ENCODE measurements at regions of chr7 and their contacts with region 1.

Region 1: DNA sequence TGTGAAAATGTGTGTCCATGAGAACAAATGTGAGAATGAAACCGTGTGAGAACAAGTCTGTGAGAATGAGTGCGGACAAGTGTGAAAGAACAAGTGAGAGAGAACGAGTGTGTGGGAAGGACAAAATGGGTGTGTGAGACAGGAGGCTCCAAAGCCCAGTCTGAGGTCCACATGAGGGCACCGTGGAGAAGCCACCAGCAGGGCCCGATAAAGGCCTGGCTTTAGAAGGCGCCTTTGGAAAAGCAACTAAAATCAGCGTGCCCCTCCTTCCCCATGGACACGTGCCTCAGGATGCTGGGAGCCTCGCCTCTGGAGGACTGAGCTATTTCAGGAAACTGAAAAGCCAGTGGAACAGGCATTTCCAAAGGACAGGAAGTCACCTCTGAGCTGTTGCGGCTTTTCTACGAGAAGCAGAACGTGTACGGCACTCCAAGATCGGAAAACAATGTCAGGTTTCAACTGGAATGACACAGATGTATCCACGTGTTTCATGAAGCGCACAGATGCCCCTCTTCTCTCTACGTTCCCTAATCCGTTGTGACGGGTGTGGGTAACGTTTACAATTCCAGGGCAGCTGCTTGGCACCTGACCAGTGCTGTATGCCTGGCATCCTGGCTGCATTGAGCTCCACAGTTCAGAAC is 46.4 kb downstream of the ESYT2 start:
- DNase-seq: peak; percentile 36
- ATAC-seq: peak; percentile 49
- H3K4me3 Mint-ChIP-seq: no peak overlapping the region
- H3K27ac Mint-ChIP-seq: no peak overlapping the region
- H3K4me1 Mint-ChIP-seq: peaks cover 2% of the 10 kb centered on the region
- H3K27me3 Mint-ChIP-seq: no peaks in the 10 kb centered on the region
- CTCF ChIP-seq: no peak

Region 2: GRCh38 chr7:158763454-158764033 is 19.3 kb before region 1 on chr7:
- CTCF ChIA-PET with region 1: no interaction called
- POLR2A ChIA-PET with region 1: no interaction called
- intact Hi-C with region 1: no loop called
- DNase-seq: no peak
- ATAC-seq: no peak
- H3K4me3 Mint-ChIP-seq: no peak overlapping the region
- H3K27ac Mint-ChIP-seq: no peak overlapping the region
- H3K4me1 Mint-ChIP-seq: peaks cover 10% of the 10 kb centered on the region
- H3K27me3 Mint-ChIP-seq: no peaks in the 10 kb centered on the region
- CTCF ChIP-seq: no peak

Region 3: DNA sequence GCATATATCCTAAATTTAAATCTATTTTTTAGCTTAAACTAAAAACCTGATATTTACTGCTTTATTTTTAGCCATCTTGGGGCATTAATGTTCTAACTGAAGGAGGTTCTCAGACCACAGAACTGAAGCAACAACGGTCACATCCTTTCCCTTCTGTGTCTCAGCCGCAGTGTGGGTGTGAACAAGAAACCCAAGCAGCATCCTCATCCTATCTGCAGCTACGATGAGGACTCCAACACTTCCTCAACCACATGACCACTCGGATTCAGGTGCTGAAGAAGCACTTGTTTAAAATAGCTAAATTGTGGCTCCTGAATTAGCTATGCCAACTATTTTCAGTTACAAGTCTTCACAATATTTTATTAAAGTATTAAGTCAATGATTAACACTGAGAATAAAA is 41.1 kb after region 1 on chr7:
- CTCF ChIA-PET with region 1: no interaction called
- POLR2A ChIA-PET with region 1: interaction called, 6 read pairs
- intact Hi-C with region 1: loop called (anchors 5 kb)
- DNase-seq: peak; percentile 85
- ATAC-seq: peak; percentile 64
- H3K4me3 Mint-ChIP-seq: peak overlapping the region; percentile 47
- H3K27ac Mint-ChIP-seq: peak overlapping the region; percentile 80
- H3K4me1 Mint-ChIP-seq: peaks cover 65% of the 10 kb centered on the region
- H3K27me3 Mint-ChIP-seq: no peaks in the 10 kb centered on the region
- CTCF ChIP-seq: no peak

Region 4: DNA sequence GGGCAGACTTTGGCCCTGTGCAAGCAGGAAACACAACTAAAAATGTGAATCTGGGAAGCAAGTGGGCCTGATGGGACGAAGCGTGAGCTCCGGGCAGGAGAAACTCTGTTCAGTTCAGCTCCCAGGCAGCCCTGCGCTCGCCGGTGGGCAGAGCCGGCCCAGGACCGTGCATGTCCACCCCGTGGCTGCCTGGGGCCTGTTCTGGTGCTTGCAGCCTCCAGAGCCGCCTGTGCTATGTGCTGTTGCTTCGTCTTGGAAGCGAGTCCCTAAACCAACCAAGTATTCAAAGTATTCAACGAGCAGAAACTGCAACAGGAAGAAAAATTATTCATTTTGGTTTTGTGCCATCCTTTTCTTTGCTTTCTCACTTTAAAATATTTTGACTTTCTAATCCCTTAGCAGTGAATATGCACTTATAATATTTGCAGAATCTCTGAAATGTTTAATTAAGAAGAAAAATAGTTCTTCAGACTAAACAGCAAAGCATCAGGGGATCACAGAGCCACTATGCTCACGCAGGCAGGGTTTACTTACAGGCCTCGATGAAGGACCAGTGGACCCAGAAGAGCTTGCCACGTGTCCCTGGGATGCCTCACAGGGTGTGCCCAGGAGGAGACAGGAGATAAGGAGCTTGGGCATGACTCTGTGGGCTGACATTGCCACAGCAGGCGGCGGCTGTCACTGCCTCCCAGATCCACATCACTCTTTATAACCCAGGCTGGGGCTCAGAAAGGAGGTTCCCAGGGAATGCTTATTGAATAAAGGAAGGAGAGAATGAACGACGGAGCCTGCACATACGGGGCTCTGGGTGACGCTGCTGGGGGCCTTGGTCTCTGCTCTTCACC is 316.2 kb after region 1 on chr7:
- CTCF ChIA-PET with region 1: no interaction called
- POLR2A ChIA-PET with region 1: no interaction called
- intact Hi-C with region 1: no loop called
- DNase-seq: no peak
- ATAC-seq: no peak
- H3K4me3 Mint-ChIP-seq: no peak overlapping the region
- H3K27ac Mint-ChIP-seq: no peak overlapping the region
- H3K4me1 Mint-ChIP-seq: no peaks in the 10 kb centered on the region
- H3K27me3 Mint-ChIP-seq: no peaks in the 10 kb centered on the region
- CTCF ChIP-seq: no peak